IMR-90 (cell line): ENCODE measurements at regions of chr18 and their contacts with region 1.

Region 1: GRCh38 chr18:32879497-32879896 is 106.7 kb upstream of the KLHL14 start:
- DNase-seq: no peak
- ATAC-seq: no peak
- H3K4me3 ChIP-seq: no peak overlapping the region
- H3K27ac ChIP-seq: no peak overlapping the region
- H3K4me1 ChIP-seq: no peaks in the 10 kb centered on the region
- H3K27me3 ChIP-seq: no peaks in the 10 kb centered on the region
- CTCF ChIP-seq: no peak
- POLR2A ChIP-seq: no peak
- RAD21 ChIP-seq: no peak

Region 2: GRCh38 chr18:32629981-32630700 is 249.4 kb before region 1 on chr18:
- CTCF ChIA-PET with region 1: no interaction called
- POLR2A ChIA-PET with region 1: no interaction called
- dilution Hi-C with region 1: no loop called
- in situ Hi-C with region 1: no loop called
- intact Hi-C with region 1: loop called (anchors 10 kb)
- DNase-seq: no peak
- ATAC-seq: no peak
- H3K4me3 ChIP-seq: no peak overlapping the region
- H3K27ac ChIP-seq: no peak overlapping the region
- H3K4me1 ChIP-seq: no peaks in the 10 kb centered on the region
- H3K27me3 ChIP-seq: no peaks in the 10 kb centered on the region
- CTCF ChIP-seq: no peak
- POLR2A ChIP-seq: no peak
- RAD21 ChIP-seq: no peak